ENCODE measurements at regions of chr9 and their contacts with region 1.

Region 1: GRCh38 chr9:35553670-35554543 is 51.2 kb upstream of the TESK1 start:
- DNase-seq: peak; percentile 60
- H3K4me3 Mint-ChIP-seq: no peak overlapping the region
- H3K27ac Mint-ChIP-seq: no peak overlapping the region
- H3K4me1 Mint-ChIP-seq: no peaks in the 10 kb centered on the region
- H3K27me3 Mint-ChIP-seq: no peaks in the 10 kb centered on the region

Region 2: GRCh38 chr9:35258676-35259474 is 295.0 kb before region 1 on chr9:
- CTCF ChIA-PET with region 1: interaction called, 11 read pairs
- DNase-seq: peak; percentile 67
- H3K4me3 Mint-ChIP-seq: no peak overlapping the region
- H3K27ac Mint-ChIP-seq: no peak overlapping the region
- H3K4me1 Mint-ChIP-seq: no peaks in the 10 kb centered on the region
- H3K27me3 Mint-ChIP-seq: peaks cover 8% of the 10 kb centered on the region

Region 3: GRCh38 chr9:35481347-35481975 is 72.4 kb before region 1 on chr9:
- CTCF ChIA-PET with region 1: interaction called, 29 read pairs
- DNase-seq: peak; percentile 56
- H3K4me3 Mint-ChIP-seq: no peak overlapping the region
- H3K27ac Mint-ChIP-seq: no peak overlapping the region
- H3K4me1 Mint-ChIP-seq: no peaks in the 10 kb centered on the region
- H3K27me3 Mint-ChIP-seq: peaks cover 28% of the 10 kb centered on the region

Region 4: DNA sequence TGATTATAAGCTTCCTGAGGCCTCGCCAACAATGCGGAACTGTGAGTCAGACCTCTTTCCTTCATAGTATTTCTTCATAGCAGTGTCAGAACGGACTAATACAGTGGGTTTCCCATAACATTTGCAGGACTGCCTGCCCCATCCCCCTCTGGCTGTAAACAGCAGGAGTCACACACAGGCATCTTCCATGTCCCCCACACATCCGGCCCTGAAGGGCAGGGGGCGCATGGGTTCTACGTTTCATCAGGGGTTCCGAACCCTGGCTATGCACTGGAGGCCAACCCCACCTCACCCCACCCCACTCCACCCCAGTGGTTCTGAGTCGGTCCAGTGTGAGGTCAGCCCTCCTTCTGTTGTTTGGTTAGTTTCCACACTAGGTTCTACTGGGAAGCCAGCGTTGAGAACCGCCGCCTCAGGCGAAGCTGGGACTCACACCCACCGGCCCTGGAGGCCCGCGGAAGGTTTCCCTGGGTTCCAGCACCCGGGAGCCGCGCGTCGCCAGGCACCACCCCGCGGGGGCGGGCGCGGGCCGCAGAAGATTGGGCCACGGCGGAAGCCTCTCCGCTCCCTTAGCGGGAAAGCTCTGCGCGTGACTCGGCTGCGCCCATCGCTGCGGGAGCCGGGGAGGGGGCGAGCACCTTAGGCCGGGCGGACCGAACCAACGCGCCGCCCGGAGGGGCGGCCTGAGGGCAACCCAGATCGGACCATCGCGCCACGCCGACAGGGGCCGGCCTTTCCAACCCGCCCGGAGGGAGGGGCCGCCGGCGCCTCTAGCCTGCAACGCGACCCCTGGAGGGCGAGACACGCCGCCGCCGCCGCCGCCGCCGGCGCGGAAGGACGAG is 64.4 kb before region 1 on chr9 and contains the start of gene RUSC2:
- CTCF ChIA-PET with region 1: interaction called, 14 read pairs
- DNase-seq: peak; percentile 72
- H3K4me3 Mint-ChIP-seq: peak within 1 kb of the TSS; percentile 79
- H3K27ac Mint-ChIP-seq: no peak within 1 kb of the TSS
- H3K4me1 Mint-ChIP-seq: peaks cover 29% of the 10 kb centered on the region
- H3K27me3 Mint-ChIP-seq: peaks cover 29% of the 10 kb centered on the region

Region 5: DNA sequence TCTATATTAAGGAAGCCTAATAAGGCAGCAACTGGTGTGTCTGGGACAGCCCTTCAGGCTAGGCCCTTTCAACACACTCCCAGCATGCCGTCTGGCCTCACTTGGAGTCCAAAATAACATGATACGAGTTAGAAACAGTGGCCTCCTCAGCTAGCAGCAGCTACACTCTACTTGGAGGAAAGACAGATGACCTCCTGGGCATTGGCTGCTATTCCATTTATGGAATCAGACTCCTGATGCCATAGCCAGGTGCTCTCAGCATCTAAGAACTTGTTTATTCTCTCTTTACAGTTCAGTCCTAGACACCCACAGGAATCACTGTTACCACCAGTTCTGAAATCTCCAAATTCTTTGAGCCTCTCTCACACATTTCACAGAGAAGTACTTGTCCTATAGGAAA is 32.2 kb before region 1 on chr9:
- CTCF ChIA-PET with region 1: interaction called, 10 read pairs
- DNase-seq: no peak
- H3K4me3 Mint-ChIP-seq: no peak overlapping the region
- H3K27ac Mint-ChIP-seq: no peak overlapping the region
- H3K4me1 Mint-ChIP-seq: no peaks in the 10 kb centered on the region
- H3K27me3 Mint-ChIP-seq: no peaks in the 10 kb centered on the region